AG04449 (cell line): ENCODE measurements at regions of chr11 and their contacts with region 1.

Region 1: DNA sequence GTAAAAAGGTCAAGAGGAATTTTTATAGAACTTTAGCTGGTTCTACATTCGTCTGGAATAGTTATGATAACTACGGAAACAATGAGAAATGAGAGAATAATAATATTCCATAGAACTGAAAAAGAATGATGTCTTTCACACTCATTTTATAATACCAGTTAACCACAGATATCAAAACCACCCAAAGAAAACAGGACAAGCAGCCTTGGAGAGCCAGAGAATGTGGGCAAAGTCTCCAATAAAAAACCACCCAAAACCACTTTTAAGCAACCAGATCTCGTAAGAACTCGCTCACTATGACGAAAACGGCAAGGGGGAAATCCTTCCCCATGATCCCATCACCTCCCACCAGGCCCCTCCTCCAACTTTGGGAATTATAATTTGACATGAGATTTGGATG is 60.8 kb downstream of the ARHGAP32 start:
- DNase-seq: no peak
- H3K4me3 ChIP-seq: no peak overlapping the region
- CTCF ChIP-seq: no peak

Region 2: DNA sequence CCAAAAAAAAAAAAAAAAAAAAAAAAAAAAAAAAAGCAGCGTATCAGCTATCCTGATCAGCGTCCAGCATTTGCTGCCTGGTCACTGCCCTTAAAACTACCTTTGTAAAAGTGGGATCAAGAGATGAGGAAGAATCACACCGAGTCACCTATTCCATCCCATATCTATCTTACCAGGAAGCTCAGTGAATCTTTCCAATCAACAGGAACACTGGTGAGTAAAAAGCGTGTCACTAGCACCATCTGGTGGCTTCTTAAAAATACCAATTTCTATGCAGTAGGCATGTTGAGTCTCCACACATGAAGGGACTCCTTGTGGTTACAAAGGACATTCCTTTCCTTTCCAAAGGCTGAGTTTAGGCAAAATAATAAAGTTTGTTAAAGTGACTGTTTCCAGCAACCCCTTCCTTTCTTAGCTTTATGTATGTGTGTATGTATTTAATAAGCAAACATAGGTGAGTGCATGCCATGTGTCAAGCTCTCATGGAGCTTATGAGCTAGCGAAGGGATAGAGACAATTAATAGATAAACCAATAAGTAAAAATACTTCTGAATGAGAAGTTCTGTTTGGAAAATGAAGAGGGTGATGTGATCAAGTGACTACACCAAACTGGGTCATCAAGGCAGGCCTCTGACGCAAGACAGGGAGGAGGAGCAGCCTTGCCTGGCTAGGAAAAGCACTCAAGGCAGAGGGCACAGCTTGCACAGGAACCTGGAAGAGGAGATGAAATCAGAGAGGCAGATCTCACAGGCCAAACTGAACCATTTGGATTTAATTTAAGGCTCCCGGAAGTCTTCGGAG is 174.7 kb before region 1 on chr11:
- CTCF ChIA-PET with region 1: no interaction called
- POLR2A ChIA-PET with region 1: no interaction called
- DNase-seq: peak; percentile 26
- H3K4me3 ChIP-seq: no peak overlapping the region
- CTCF ChIP-seq: peak; percentile 57

Region 3: GRCh38 chr11:129041611-129042018 is 89.7 kb before region 1 on chr11:
- CTCF ChIA-PET with region 1: no interaction called
- POLR2A ChIA-PET with region 1: no interaction called
- DNase-seq: no peak
- H3K4me3 ChIP-seq: no peak overlapping the region
- CTCF ChIP-seq: no peak

Region 4: DNA sequence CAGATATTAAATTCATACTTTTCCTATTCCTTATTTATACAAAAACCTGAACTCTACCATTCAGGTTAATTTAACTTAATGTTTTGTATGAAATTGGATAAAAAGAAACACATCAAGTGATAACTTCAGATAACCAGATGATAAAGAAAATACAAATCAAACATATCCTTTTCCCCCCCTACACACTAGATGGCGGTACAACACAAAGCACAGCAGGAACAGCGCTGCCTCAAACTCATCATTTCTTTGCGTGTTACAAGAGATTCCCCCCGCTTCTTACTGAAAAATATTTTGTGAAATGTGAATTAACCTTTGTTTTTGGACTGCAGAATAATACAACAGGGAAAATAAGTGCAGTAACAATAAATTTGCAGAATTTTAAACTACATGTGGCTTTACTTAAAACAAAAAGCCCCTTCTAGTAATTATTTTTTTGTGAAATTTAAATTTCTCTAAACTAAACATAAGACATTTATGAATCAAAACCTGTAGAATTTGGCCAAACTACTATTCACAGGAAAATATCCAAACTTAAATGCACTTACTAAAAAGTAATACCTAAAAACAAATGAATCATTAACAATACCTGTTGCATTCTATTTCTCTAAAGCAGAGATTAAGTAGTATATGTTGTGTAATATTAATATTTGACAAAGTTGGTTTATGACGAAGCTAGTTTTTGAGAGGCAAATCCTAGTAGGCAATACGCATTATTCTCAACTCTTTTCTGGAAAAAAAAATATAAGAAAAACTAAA is 13.5 kb before region 1 on chr11:
- CTCF ChIA-PET with region 1: interaction called, 11 read pairs
- POLR2A ChIA-PET with region 1: no interaction called
- DNase-seq: peak; percentile 26
- H3K4me3 ChIP-seq: no peak overlapping the region
- CTCF ChIP-seq: peak; percentile 66

Region 5: GRCh38 chr11:129148496-129148895 is 17.2 kb after region 1 on chr11:
- CTCF ChIA-PET with region 1: no interaction called
- POLR2A ChIA-PET with region 1: no interaction called
- DNase-seq: no peak
- H3K4me3 ChIP-seq: no peak overlapping the region
- CTCF ChIP-seq: no peak

Region 6: GRCh38 chr11:129209891-129210830 is 78.8 kb after region 1 on chr11:
- CTCF ChIA-PET with region 1: no interaction called
- POLR2A ChIA-PET with region 1: no interaction called
- DNase-seq: no peak
- H3K4me3 ChIP-seq: no peak overlapping the region
- CTCF ChIP-seq: no peak